Aorta (tissue), 5 donors: ENCODE measurements at regions of chr9 and their contacts with region 1.

Region 1: GRCh38 chr9:111597817-111598729 is 1.4 kb downstream of the PTGR1 start:
- DNase-seq: peak; percentile 66 to 84
- ATAC-seq: peak; percentile 49
- H3K4me3 ChIP-seq: peak overlapping the region; percentile 62 to 84
- H3K27ac ChIP-seq: no peak overlapping the region
- H3K4me1 ChIP-seq: no peaks in the 10 kb centered on the region
- H3K27me3 ChIP-seq: no peaks in the 10 kb centered on the region

Region 2: DNA sequence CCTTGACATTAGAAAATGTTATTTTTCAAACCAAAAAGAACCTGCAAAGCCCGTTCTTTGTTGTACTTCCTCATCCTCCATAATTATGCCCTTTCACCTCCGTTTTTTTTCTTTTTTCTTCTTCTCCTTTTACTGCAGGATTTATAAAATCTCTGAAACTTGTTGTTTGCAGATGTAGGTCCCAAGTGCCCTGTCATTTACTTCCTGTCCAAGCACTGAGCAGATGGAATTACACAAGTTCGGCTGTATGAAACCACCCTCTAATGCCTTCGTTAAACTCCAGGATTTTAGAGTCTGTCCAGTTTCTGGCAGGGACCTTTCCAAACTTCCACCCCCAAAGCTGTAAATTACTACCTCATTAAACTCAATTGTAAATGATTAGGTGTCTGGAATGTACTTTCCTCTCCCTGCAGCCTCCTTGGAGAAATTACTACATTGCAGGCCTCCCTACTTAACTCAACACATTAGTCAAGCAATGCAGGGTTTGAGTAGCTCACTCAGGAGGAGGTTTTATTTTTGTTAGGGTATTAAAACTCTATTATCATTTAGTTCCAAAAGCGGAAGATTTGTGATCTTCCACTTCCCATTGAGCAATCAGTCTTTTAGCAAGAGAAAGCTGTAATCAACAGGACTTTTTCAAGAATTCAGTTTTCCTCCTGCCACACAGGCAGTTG is 434.2 kb before region 1 on chr9:
- intact Hi-C with region 1: no loop called
- DNase-seq: no peak
- ATAC-seq: peak; percentile 78
- H3K4me3 ChIP-seq: no peak overlapping the region
- H3K27ac ChIP-seq: no peak overlapping the region
- H3K4me1 ChIP-seq: no peaks in the 10 kb centered on the region
- H3K27me3 ChIP-seq: no peaks in the 10 kb centered on the region

Region 3: DNA sequence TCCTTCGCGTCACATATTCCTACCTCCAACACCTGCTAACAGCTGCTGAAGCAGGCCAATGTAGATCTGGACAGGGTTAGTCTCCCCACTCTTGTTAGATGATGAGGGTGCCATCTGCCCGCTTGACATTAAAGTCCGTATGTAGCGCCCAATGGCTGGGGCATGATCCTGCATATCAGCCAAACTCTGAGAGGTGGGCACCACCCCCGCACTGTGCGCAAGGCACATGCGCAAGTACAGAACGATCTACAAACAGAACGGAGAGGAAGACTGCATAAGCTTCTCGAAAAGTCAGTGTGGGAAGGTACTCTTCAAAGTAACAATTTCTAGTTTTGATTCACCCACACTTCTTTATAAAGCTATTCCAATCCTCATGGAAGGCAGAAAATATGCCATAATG is 183.7 kb before region 1 on chr9:
- intact Hi-C with region 1: no loop called
- DNase-seq: no peak
- ATAC-seq: no peak
- H3K4me3 ChIP-seq: no peak overlapping the region
- H3K27ac ChIP-seq: no peak overlapping the region
- H3K4me1 ChIP-seq: no peaks in the 10 kb centered on the region
- H3K27me3 ChIP-seq: no peaks in the 10 kb centered on the region

Region 4: GRCh38 chr9:111661802-111662521 is 63.9 kb after region 1 on chr9:
- intact Hi-C with region 1: loop called in 1 of 2 experiments (anchors 2 kb)
- DNase-seq: peak; percentile 59 to 86
- ATAC-seq: peak; percentile 68
- H3K4me3 ChIP-seq: peak overlapping the region; percentile 85 to 90
- H3K27ac ChIP-seq: no peak overlapping the region
- H3K4me1 ChIP-seq: no peaks in the 10 kb centered on the region
- H3K27me3 ChIP-seq: no peaks in the 10 kb centered on the region

Region 5: DNA sequence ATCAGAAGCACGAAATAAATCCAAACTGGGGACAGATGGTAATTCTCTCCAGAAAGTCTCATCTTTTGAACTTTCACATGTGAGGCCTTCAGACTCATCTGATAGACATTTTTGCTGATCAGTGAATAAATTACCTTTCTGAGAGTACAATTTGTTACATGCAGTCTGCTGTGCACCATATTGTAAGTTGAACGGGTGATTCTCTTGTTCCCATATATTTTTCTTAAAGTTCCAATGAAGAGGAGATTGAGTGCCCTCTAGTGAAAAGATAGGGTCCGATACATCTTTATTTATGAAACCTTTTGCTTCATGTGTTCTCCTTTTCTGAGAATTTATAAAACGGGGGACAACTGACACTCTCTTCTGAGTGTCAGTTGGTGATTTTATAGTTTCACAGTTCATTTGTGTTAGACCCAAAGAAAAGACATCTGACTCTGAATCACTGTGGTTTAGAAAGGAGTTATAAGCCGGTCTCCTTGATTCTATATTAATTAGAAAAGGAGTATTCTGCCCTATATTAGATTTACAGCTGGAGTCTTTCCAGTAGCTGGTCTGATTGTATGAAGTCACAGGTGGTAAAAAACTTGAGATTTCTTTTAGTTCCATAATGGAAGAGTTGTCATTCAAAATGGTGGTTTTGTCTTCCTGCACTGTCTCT is 93.7 kb after region 1 on chr9:
- intact Hi-C with region 1: loop called in 1 of 2 experiments (anchors 5 kb)
- DNase-seq: no peak
- ATAC-seq: no peak
- H3K4me3 ChIP-seq: no peak overlapping the region
- H3K27ac ChIP-seq: no peak overlapping the region
- H3K4me1 ChIP-seq: no peaks in the 10 kb centered on the region
- H3K27me3 ChIP-seq: no peaks in the 10 kb centered on the region

Region 6: DNA sequence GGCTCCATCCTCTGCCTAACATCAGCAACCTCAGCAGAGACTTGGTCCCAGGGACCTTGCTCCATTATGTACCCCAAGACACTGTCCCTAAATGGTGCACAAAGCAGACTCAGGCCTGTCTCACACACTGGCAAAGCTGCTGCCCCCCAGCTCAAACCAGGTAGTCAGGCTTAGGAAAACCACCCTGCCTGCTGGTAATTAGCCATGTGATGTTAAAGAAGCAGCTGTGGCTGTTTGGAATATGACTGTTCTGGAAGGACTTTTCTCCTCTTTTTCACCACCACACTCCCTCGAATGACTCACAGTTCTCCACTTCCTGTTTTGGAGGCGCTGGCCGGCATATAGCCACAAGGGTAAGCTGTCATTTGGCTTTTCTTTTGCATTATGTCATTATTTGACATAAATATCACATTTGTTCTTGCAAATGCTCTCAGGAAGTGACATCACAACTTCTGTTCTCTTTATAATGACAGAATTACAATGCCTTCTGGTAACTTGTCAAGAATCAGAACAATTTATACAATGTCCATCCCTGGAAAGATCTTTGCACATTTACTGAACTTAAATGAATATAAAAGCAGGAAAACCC is 463.2 kb after region 1 on chr9:
- intact Hi-C with region 1: loop called in 1 of 2 experiments (anchors 10 kb)
- DNase-seq: peak; percentile 79 to 88
- ATAC-seq: peak; percentile 87
- H3K4me3 ChIP-seq: no peak overlapping the region
- H3K27ac ChIP-seq: peak overlapping the region; percentile 22 to 82
- H3K4me1 ChIP-seq: peaks cover 0 to 2% of the 10 kb centered on the region in 2 donors
- H3K27me3 ChIP-seq: no peaks in the 10 kb centered on the region

Region 7: GRCh38 chr9:112074250-112075008 is 476.4 kb after region 1 on chr9:
- intact Hi-C with region 1: loop called (anchors 5 to 10 kb)
- DNase-seq: peak in 1 of 2 donors; percentile 72
- ATAC-seq: peak; percentile 91
- H3K4me3 ChIP-seq: no peak overlapping the region
- H3K27ac ChIP-seq: no peak overlapping the region
- H3K4me1 ChIP-seq: no peaks in the 10 kb centered on the region
- H3K27me3 ChIP-seq: no peaks in the 10 kb centered on the region